ENCODE measurements at regions of chr3 and their contacts with region 1.

Region 1: GRCh38 chr3:21120826-21121225 is 630.2 kb downstream of the ZNF385D start:
- DNase-seq: no peak
- H3K4me3 Mint-ChIP-seq: no peak overlapping the region
- H3K27ac Mint-ChIP-seq: no peak overlapping the region
- H3K4me1 Mint-ChIP-seq: no peaks in the 10 kb centered on the region
- H3K27me3 Mint-ChIP-seq: no peaks in the 10 kb centered on the region
- CTCF ChIP-seq: no peak

Region 2: DNA sequence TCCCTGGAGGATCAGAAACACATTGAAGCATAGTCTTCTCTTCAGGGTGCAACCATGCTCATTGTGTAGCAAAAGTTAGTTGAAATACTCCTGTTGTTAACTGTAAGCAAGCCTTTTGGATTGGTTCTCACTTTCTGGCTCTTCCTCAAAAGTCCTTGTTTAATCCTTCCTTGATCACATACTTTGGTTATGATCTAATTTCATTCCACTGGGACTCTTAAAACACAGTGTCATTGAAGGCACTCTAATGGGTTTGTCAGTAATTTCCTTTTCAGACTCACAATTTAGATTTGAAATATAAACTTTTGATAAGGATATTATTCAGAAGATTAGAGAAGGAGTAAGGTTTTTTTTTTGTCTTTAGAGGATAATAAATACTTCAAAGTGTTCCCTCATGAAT is 483.1 kb before region 1 on chr3:
- CTCF ChIA-PET with region 1: interaction called, 10 read pairs
- intact Hi-C with region 1: no loop called
- DNase-seq: no peak
- H3K4me3 Mint-ChIP-seq: no peak overlapping the region
- H3K27ac Mint-ChIP-seq: no peak overlapping the region
- H3K4me1 Mint-ChIP-seq: no peaks in the 10 kb centered on the region
- H3K27me3 Mint-ChIP-seq: no peaks in the 10 kb centered on the region
- CTCF ChIP-seq: no peak

Region 3: DNA sequence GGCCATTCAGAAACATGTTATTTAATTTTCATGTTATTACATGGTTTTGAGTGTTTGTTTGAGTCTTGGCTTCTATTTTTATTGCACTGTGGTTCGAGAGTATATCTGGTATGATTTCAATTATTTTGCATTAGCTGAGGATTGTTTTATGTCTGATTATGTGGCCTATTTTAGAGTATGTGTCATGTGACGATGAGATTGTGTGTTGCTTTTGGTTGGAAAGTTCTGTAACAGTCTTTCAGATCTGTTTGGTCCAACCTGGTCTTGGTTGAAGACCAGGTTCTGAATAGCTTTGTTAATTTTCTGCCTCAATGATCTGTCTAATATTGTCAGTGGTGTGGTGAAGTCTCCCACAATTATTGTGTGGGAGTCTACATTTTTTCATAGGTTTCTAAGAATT is 171.5 kb before region 1 on chr3:
- CTCF ChIA-PET with region 1: no interaction called
- intact Hi-C with region 1: no loop called
- DNase-seq: no peak
- H3K4me3 Mint-ChIP-seq: no peak overlapping the region
- H3K27ac Mint-ChIP-seq: no peak overlapping the region
- H3K4me1 Mint-ChIP-seq: no peaks in the 10 kb centered on the region
- H3K27me3 Mint-ChIP-seq: no peaks in the 10 kb centered on the region
- CTCF ChIP-seq: no peak

Region 4: GRCh38 chr3:21170964-21171363 is 50.1 kb after region 1 on chr3:
- CTCF ChIA-PET with region 1: no interaction called
- intact Hi-C with region 1: no loop called
- DNase-seq: peak; percentile 27
- H3K4me3 Mint-ChIP-seq: no peak overlapping the region
- H3K27ac Mint-ChIP-seq: no peak overlapping the region
- H3K4me1 Mint-ChIP-seq: no peaks in the 10 kb centered on the region
- H3K27me3 Mint-ChIP-seq: no peaks in the 10 kb centered on the region
- CTCF ChIP-seq: peak; percentile 27

Measured in Calu3 (cell line).